Mammary epithelial cell (primary cell): ENCODE measurements at regions of chr11 and their contacts with region 1.

Region 1: GRCh38 chr11:110092515-110093404 is at the start of gene ZC3H12C:
- DNase-seq: peak; percentile 95
- H3K4me3 ChIP-seq: peak within 1 kb of the TSS; percentile 73 to 87 (median 74)
- H3K27ac ChIP-seq: peak within 1 kb of the TSS; percentile 90
- H3K4me1 ChIP-seq: peaks cover 39% of the 10 kb centered on the region
- H3K27me3 ChIP-seq: no peaks in the 10 kb centered on the region
- CTCF ChIP-seq: peak; percentile 8 to 62
- total RNA-seq, gene ZC3H12C: 16.0 to 26.9 TPM

Region 2: GRCh38 chr11:109984634-109985289 is 108.0 kb before region 1 on chr11:
- CTCF ChIA-PET with region 1: interaction called, 12 read pairs
- dilution Hi-C with region 1: no loop called
- in situ Hi-C with region 1: no loop called
- intact Hi-C with region 1: no loop called
- DNase-seq: peak; percentile 70
- H3K4me3 ChIP-seq: no peak overlapping the region
- H3K27ac ChIP-seq: no peak overlapping the region
- H3K4me1 ChIP-seq: no peaks in the 10 kb centered on the region
- H3K27me3 ChIP-seq: no peaks in the 10 kb centered on the region
- CTCF ChIP-seq: no peak

Region 3: DNA sequence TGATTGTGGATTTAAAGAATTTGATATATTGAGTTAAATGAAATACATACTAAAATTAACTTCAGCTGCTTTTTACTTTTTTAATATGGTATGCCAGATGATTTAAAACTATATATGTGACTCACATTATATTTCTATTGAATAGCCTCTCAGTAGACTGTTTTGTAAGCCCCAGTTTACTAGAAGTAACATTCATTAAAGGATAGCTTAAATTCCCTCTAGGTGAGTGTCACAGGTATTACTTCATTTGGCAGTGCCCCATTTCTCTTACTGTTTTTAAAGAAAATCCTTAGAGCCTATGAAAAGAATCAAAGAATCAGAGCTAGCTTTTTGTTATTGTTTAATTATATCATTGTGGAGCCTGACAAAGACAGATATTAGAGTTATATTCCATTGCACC is 49.1 kb after region 1 on chr11:
- CTCF ChIA-PET with region 1: no interaction called
- dilution Hi-C with region 1: no loop called
- in situ Hi-C with region 1: no loop called
- intact Hi-C with region 1: loop called (anchors 5 kb)
- DNase-seq: peak; percentile 50
- H3K4me3 ChIP-seq: no peak overlapping the region
- H3K27ac ChIP-seq: no peak overlapping the region
- H3K4me1 ChIP-seq: no peaks in the 10 kb centered on the region
- H3K27me3 ChIP-seq: no peaks in the 10 kb centered on the region
- CTCF ChIP-seq: no peak